ENCODE measurements at regions of chr17 and their contacts with region 1.

Region 1: DNA sequence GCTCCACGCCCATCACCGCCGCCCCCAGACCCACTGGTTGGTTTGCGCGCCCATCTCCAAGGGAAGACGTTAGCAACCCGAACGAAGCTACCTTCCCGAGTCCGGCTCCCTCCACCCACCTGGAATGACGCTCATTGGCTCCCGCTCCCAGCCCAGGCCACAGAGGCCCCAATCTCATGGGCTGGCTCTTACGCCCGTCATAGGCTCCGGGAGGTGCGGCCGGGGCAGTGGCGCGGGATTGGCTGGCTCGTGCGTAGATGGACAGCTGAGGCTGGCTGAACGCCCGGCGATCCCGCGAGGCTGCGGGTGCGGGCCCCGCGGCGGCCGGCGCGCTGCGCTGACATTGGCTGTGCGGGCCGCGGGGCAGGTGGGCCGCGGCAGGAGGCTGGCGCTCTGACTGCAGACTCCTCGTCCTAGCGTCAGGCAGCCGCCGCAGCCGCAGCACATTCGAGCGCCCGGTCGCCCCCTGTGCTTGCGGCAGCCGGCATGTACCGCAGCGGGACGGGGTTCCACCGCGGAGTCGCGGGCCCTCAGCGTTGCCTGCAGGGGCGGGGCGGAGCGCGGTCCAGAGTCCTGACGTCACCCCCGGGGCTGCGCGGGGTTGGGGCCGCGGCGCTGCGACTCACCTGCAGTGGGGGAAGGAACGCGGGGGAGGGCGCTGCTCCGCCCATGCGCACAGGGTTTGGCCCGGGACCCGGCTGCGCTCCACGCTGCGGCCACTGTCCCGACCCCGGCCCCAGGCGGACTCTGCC is 453 bp upstream of the MYH10 start:
- DNase-seq: peak; percentile 96 to 99
- H3K4me3 ChIP-seq: peak overlapping the region; percentile 74
- H3K4me3 Mint-ChIP-seq: peak overlapping the region; percentile 93
- H3K27ac Mint-ChIP-seq: peak overlapping the region; percentile 84
- H3K4me1 ChIP-seq: no peaks in the 10 kb centered on the region; the same call in 1 of the 2 replicates
- H3K4me1 Mint-ChIP-seq: peaks cover 13% of the 10 kb centered on the region
- H3K27me3 ChIP-seq: no peaks in the 10 kb centered on the region
- H3K27me3 Mint-ChIP-seq: no peaks in the 10 kb centered on the region
- CTCF ChIP-seq: no peak

Region 2: GRCh38 chr17:8563981-8564602 is 66.9 kb before region 1 on chr17:
- CTCF ChIA-PET with region 1: no interaction called
- POLR2A ChIA-PET with region 1: no interaction called
- intact Hi-C with region 1: no loop called
- DNase-seq: no peak
- H3K4me3 ChIP-seq: no peak overlapping the region
- H3K4me3 Mint-ChIP-seq: no peak overlapping the region
- H3K27ac Mint-ChIP-seq: no peak overlapping the region
- H3K4me1 ChIP-seq: no peaks in the 10 kb centered on the region
- H3K4me1 Mint-ChIP-seq: no peaks in the 10 kb centered on the region
- H3K27me3 ChIP-seq: no peaks in the 10 kb centered on the region
- H3K27me3 Mint-ChIP-seq: no peaks in the 10 kb centered on the region
- CTCF ChIP-seq: no peak

Region 3: GRCh38 chr17:8745586-8746500 is 114.9 kb after region 1 on chr17:
- CTCF ChIA-PET with region 1: interaction called, 4 read pairs
- POLR2A ChIA-PET with region 1: no interaction called
- intact Hi-C with region 1: loop called (anchors 10 kb)
- DNase-seq: peak in 1 of 2 experiments; percentile 61
- H3K4me3 ChIP-seq: peak overlapping the region; percentile 47
- H3K4me3 Mint-ChIP-seq: peak overlapping the region; percentile 59
- H3K27ac Mint-ChIP-seq: no peak overlapping the region
- H3K4me1 ChIP-seq: no peaks in the 10 kb centered on the region
- H3K4me1 Mint-ChIP-seq: no peaks in the 10 kb centered on the region
- H3K27me3 ChIP-seq: no peaks in the 10 kb centered on the region; the same call in 1 of the 2 replicates
- H3K27me3 Mint-ChIP-seq: no peaks in the 10 kb centered on the region
- CTCF ChIP-seq: peak; percentile 51 to 75

Measured in Caco-2 (cell line).